Endothelial cell of umbilical vein (primary cell): ENCODE measurements at regions of chr5 and their contacts with region 1.

Region 1: GRCh38 chr5:107571621-107572536 is 98.9 kb downstream of the EFNA5 start:
- DNase-seq: peak; percentile 97
- H3K4me3 ChIP-seq: peak overlapping the region in 2 of 3 experiments; percentile 31 to 59
- H3K27ac ChIP-seq: peak overlapping the region; percentile 88
- H3K4me1 ChIP-seq: peaks cover 36% of the 10 kb centered on the region
- H3K27me3 ChIP-seq: no peaks in the 10 kb centered on the region
- CTCF ChIP-seq: peak; percentile 93 to 94
- POLR2A ChIP-seq: no peak

Region 2: DNA sequence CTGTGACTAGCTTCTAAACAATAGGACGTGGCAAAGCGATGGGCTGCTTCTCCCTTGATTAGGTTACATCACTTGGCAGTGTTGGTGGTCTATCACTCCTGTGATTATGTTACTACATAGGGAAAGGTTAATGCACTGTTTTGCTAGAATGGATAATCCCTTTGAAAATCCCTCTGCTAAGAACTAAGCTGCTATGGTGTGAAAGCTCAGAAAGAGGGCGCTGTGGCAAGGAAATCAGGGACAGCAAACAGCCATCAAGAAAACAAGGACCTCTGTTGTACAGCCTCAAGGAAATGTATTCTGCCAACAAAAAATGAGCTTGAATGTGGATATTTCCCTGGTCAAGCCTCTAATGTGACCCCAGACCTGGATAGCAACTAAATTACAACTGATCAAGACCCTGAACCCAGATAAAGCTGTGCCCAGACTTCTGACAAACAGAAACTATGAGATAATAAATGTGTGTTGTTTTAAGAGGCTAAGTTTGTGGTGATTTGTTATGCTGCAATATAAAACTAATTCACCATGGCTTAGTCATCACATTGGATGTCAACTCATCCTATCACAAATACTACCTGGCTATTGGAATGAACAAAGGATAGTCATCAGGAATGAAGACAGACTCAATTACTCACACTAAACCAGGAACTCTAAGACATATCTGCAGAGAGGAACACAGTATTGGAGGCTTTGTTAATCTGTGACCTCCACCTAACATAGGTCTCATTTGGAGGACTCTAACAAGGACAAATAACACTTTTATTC is 1117.0 kb before region 1 on chr5:
- CTCF ChIA-PET with region 1: interaction called, 12 read pairs
- POLR2A ChIA-PET with region 1: interaction called, 4 read pairs
- dilution Hi-C with region 1: no loop called
- intact Hi-C with region 1: loop called (anchors 10 kb)
- DNase-seq: peak; percentile 72
- H3K4me3 ChIP-seq: no peak overlapping the region
- H3K27ac ChIP-seq: no peak overlapping the region
- H3K4me1 ChIP-seq: no peaks in the 10 kb centered on the region
- H3K27me3 ChIP-seq: no peaks in the 10 kb centered on the region
- CTCF ChIP-seq: peak; percentile 46 to 62
- POLR2A ChIP-seq: no peak

Region 3: DNA sequence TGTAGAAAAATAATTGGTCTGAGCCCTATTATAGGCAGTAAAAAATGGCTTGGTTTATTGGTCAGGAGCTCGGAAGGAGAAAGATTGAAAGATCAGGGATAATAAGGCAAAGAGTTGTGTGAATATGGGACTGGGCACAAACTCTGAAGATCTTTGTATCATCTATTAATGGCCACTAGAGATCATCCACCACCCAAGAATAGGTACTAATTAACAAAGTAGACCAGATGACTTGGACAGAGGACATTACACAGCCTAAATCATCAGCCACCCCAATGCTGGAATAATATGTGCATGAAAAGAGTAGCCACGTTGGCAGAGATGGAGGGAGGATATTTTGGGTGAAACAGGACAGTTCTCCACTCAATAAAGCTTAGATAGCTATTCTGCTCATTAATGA is 265.3 kb before region 1 on chr5:
- CTCF ChIA-PET with region 1: interaction called, 10 read pairs
- POLR2A ChIA-PET with region 1: no interaction called
- dilution Hi-C with region 1: no loop called
- intact Hi-C with region 1: no loop called
- DNase-seq: no peak
- H3K4me3 ChIP-seq: no peak overlapping the region
- H3K27ac ChIP-seq: no peak overlapping the region
- H3K4me1 ChIP-seq: no peaks in the 10 kb centered on the region
- H3K27me3 ChIP-seq: no peaks in the 10 kb centered on the region
- CTCF ChIP-seq: no peak
- POLR2A ChIP-seq: no peak

Region 4: GRCh38 chr5:107389130-107389774 is 182.6 kb before region 1 on chr5:
- CTCF ChIA-PET with region 1: interaction called, 39 read pairs
- POLR2A ChIA-PET with region 1: no interaction called
- dilution Hi-C with region 1: no loop called
- intact Hi-C with region 1: loop called (anchors 1 kb)
- DNase-seq: peak; percentile 92
- H3K4me3 ChIP-seq: no peak overlapping the region
- H3K27ac ChIP-seq: peak overlapping the region; percentile 57
- H3K4me1 ChIP-seq: peaks cover 32% of the 10 kb centered on the region
- H3K27me3 ChIP-seq: no peaks in the 10 kb centered on the region
- CTCF ChIP-seq: no peak
- POLR2A ChIP-seq: no peak

Region 5: GRCh38 chr5:107455111-107455588 is 116.7 kb before region 1 on chr5:
- CTCF ChIA-PET with region 1: no interaction called
- POLR2A ChIA-PET with region 1: no interaction called
- dilution Hi-C with region 1: no loop called
- intact Hi-C with region 1: no loop called
- DNase-seq: no peak
- H3K4me3 ChIP-seq: no peak overlapping the region
- H3K27ac ChIP-seq: no peak overlapping the region
- H3K4me1 ChIP-seq: no peaks in the 10 kb centered on the region
- H3K27me3 ChIP-seq: no peaks in the 10 kb centered on the region
- CTCF ChIP-seq: no peak
- POLR2A ChIP-seq: no peak

Region 6: DNA sequence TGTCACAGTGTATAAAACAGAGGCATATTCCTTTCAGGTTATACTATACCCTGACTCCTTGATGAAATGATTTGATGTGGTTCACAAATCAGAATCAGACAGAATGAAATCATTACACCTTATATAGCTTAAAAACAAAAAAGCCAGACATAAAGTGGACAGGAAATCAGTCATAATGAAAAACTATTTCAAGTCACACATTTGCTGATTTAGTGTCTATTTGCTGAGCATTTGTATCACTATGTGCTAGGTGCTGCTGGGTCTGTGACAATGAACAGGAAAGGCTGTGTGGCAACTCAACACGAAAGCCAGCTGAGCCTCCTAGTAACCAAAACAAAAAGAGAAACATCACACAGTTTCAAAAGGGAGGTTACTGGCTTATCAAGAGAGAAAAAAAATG is 95.1 kb before region 1 on chr5:
- CTCF ChIA-PET with region 1: interaction called, 8 read pairs
- POLR2A ChIA-PET with region 1: no interaction called
- dilution Hi-C with region 1: no loop called
- intact Hi-C with region 1: loop called (anchors 1 kb)
- DNase-seq: peak; percentile 94
- H3K4me3 ChIP-seq: no peak overlapping the region
- H3K27ac ChIP-seq: peak overlapping the region; percentile 93
- H3K4me1 ChIP-seq: peaks cover 46% of the 10 kb centered on the region
- H3K27me3 ChIP-seq: no peaks in the 10 kb centered on the region
- CTCF ChIP-seq: no peak
- POLR2A ChIP-seq: no peak